ENCODE measurements at regions of chr22 and their contacts with region 1.

Region 1: GRCh38 chr22:19109198-19110067 is 12.8 kb downstream of the DGCR2 start:
- DNase-seq: peak; percentile 75 to 86 (median 82)
- H3K4me3 ChIP-seq: peak overlapping the region; percentile 26 to 29
- H3K4me3 Mint-ChIP-seq: peak overlapping the region; percentile 77 to 89 (median 84)
- H3K27ac ChIP-seq: peak overlapping the region; percentile 80
- H3K27ac Mint-ChIP-seq: peak overlapping the region; percentile 79 to 99 (median 97)
- H3K4me1 ChIP-seq: peaks cover 66% of the 10 kb centered on the region
- H3K4me1 Mint-ChIP-seq: peaks cover 51 to 76% (median 62%) of the 10 kb centered on the region in 4 donors
- H3K27me3 ChIP-seq: no peaks in the 10 kb centered on the region
- H3K27me3 Mint-ChIP-seq: no peaks in the 10 kb centered on the region

Region 2: DNA sequence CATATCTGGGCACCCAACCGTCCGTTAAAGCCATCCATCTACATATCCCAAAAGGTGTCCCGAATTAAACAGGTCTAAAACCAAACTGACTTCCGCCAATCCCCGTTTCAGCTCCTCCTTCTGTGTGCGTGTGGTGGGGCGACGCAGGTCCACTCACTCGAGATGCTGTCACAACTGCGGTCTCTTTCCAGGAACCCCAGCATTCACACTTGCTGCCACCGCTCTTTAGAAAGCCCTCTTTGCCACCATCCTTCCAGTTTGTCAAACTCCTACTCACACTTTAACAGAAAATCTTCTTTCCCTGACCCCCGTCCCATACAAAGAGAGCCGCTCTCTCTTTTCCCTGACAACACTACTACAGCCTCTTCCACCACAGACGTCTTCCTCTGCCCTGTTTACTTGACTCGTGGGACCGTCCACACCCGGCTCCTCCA is 34.6 kb after region 1 on chr22:
- CTCF ChIA-PET with region 1: interaction called, 12 read pairs
- POLR2A ChIA-PET with region 1: interaction called, 13 read pairs
- intact Hi-C with region 1: loop called (anchors 1 kb)
- DNase-seq: peak; percentile 22 to 59 (median 44)
- H3K4me3 ChIP-seq: peak overlapping the region; percentile 86 to 94
- H3K4me3 Mint-ChIP-seq: peak overlapping the region; percentile 96 to 100 (median 98)
- H3K27ac ChIP-seq: peak overlapping the region; percentile 81
- H3K27ac Mint-ChIP-seq: peak overlapping the region; percentile 90 to 99 (median 98)
- H3K4me1 ChIP-seq: peaks cover 12% of the 10 kb centered on the region
- H3K4me1 Mint-ChIP-seq: peaks cover 11 to 25% (median 18%) of the 10 kb centered on the region in 4 donors
- H3K27me3 ChIP-seq: peaks cover 7% of the 10 kb centered on the region
- H3K27me3 Mint-ChIP-seq: peaks cover 2 to 6% of the 10 kb centered on the region in 2 donors

Region 3: DNA sequence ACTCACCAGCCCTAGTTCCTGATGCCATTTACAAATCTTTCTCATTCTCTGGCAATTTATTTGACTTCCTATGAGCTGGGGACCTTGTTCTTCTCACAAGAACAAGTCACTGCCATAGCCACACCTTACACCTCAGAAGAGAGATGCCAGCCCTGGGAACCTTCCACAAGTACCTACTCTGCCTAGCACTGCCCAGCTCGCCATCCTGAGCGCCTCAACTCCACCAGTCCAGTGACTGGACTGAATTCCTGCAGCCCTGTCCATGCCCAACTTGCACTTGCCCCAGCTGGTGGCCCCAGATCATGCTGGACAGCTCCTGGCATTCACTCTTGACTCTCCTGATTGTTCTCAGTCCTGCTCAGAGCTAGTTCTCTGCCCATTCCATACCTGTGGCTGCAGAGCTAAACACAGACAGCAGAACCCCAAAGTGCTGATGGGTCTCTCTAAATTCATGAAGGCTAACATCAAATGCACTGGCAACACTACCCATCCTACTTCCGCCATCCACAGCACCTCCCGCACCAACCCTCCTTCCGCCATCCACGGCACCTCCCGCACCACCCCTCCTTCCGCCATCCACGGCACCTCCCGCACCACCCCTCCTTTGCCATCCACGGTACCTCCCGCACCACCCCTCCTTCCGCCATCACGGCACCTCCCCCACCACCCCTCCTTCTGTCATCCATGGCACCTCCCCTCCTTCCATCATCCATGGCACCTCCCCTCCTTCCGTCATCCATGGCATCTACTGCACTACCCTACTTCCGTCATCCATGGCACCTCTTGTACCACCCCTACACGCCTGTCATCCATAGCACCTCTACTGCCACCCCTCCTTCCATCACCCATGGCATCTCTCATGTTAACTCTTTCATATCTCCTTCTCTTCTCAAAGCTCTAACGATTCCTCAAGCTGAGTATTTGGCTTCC is 92.7 kb after region 1 on chr22:
- CTCF ChIA-PET with region 1: no interaction called
- POLR2A ChIA-PET with region 1: no interaction called
- intact Hi-C with region 1: no loop called
- DNase-seq: no peak
- H3K4me3 ChIP-seq: no peak overlapping the region
- H3K4me3 Mint-ChIP-seq: no peak overlapping the region
- H3K27ac ChIP-seq: no peak overlapping the region
- H3K27ac Mint-ChIP-seq: no peak overlapping the region
- H3K4me1 ChIP-seq: no peaks in the 10 kb centered on the region
- H3K4me1 Mint-ChIP-seq: no peaks in the 10 kb centered on the region
- H3K27me3 ChIP-seq: no peaks in the 10 kb centered on the region
- H3K27me3 Mint-ChIP-seq: peaks cover 0 to 2% of the 10 kb centered on the region in 2 donors

Region 4: DNA sequence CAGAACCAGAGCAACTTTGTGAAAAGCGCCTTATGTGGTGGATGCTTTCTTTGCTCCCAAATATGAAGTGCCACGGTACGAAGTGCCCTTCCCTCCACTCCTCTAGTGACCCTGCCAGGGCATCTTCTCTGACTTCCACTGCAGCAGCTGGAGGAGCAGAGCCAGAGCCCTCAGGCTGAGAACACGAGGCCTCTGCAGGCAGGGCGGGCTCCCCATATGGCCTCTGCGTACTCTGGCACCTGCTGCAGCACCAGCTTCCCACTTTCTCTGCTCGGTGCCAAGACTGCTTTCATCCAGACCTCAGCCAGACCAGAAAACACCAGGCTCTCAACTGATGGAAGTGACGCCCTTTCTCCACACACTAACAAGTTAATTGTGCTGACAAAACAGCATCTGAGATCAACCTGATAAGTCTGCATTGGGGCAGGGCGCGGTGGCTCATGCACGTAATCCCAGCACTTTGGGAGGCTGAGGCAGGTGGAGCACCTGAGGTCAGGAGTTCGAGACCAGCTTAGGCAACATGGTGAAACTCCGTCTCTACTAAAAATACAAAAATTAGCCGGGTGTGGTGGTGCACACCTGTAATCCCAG is 356.8 kb after region 1 on chr22:
- CTCF ChIA-PET with region 1: no interaction called
- POLR2A ChIA-PET with region 1: no interaction called
- intact Hi-C with region 1: no loop called
- DNase-seq: no peak
- H3K4me3 ChIP-seq: no peak overlapping the region
- H3K4me3 Mint-ChIP-seq: no peak overlapping the region
- H3K27ac ChIP-seq: no peak overlapping the region
- H3K27ac Mint-ChIP-seq: no peak overlapping the region
- H3K4me1 ChIP-seq: peaks cover 11% of the 10 kb centered on the region
- H3K4me1 Mint-ChIP-seq: peaks cover 0 to 13% (median 4%) of the 10 kb centered on the region in 4 donors
- H3K27me3 ChIP-seq: no peaks in the 10 kb centered on the region
- H3K27me3 Mint-ChIP-seq: no peaks in the 10 kb centered on the region